Activated B cell treated with CpG ODN at 0.5 μM for 24 hours (primary cell): ENCODE measurements at regions of chr2 and their contacts with region 1.

Region 1: GRCh38 chr2:191555092-191555742 is 122.7 kb upstream of the NABP1 start:
- DNase-seq: peak; percentile 63
- ATAC-seq: peak; percentile 94
- H3K4me3 Mint-ChIP-seq: no peak overlapping the region
- H3K27ac Mint-ChIP-seq: no peak overlapping the region
- H3K4me1 Mint-ChIP-seq: peaks cover 3% of the 10 kb centered on the region
- H3K27me3 Mint-ChIP-seq: peaks cover 5% of the 10 kb centered on the region
- CTCF ChIP-seq: peak; percentile 43

Region 2: DNA sequence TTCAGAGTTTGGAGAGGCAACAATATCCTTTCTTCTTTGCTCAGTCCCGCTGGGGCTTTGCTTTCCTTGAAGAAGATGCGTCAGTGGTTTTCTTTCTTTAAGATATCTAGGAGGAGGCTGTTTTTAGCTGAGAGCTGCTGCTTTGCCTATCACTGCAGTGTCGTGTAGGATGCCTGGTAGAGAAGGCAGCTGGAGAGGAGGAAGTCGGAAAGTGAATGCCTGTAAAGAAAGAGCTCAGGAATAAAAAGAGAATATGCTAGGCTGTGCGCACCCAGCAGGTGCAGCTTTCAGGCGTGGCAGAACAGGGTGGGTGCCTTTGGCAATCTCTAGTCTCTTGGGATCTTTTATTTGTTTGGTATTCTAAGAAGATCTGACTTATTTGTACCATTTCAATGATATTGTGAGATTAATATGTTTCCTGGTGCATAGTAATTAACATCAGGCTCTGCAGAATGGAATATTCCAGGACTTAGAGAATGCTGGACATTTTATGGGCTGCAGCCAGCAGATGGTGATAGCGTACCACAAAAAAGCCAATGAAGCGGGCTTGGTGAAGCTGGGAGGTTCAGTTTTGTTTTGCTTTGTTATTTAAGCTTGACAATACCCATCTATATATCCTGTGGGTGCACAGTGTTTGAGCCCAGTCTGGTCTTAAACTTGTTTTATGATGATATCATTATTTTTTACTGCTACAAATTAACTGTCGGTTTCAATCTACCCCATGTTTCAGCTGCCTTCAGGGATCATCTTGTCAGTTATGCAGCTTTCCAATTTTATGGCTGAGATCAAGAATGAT is 256.8 kb after region 1 on chr2:
- CTCF ChIA-PET with region 1: interaction called, 3 read pairs
- POLR2A ChIA-PET with region 1: no interaction called
- intact Hi-C with region 1: loop called (anchors 5 kb)
- DNase-seq: no peak
- ATAC-seq: no peak
- H3K4me3 Mint-ChIP-seq: no peak overlapping the region
- H3K27ac Mint-ChIP-seq: no peak overlapping the region
- H3K4me1 Mint-ChIP-seq: no peaks in the 10 kb centered on the region
- H3K27me3 Mint-ChIP-seq: peaks cover 2% of the 10 kb centered on the region
- CTCF ChIP-seq: no peak

Region 3: DNA sequence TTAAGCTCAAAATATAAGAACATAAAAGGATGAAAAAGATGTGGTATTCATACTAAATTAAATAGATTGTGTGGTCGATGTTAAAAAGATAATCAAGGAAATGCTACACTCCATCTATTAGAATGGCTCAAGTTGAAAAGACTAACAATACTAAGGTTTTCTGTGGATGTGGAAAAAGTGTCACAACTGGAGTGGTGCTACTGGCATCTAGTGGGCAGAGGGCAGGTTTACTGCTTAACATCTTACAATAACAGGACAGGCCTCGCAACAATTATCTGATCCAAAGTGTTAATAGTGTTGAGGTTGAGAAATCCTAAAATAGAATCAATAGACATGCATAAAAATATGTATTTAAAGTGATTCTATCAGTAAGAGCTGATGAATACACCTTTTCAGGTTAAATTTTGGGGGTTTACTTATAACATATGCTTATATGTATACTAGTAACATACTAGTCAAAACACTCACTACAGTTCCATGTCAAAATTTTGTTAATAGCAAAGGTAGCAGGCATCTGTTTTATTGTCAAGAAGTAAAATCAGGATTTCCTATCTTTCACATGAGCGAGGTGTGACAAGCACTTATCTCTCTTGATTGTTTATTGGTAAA is 731.0 kb after region 1 on chr2:
- CTCF ChIA-PET with region 1: no interaction called
- POLR2A ChIA-PET with region 1: no interaction called
- intact Hi-C with region 1: loop called (anchors 2 kb)
- DNase-seq: no peak
- ATAC-seq: no peak
- H3K4me3 Mint-ChIP-seq: no peak overlapping the region
- H3K27ac Mint-ChIP-seq: no peak overlapping the region
- H3K4me1 Mint-ChIP-seq: no peaks in the 10 kb centered on the region
- H3K27me3 Mint-ChIP-seq: no peaks in the 10 kb centered on the region
- CTCF ChIP-seq: no peak